AG04450 (cell line): ENCODE measurements at regions of chr2 and their contacts with region 1.

Region 1: DNA sequence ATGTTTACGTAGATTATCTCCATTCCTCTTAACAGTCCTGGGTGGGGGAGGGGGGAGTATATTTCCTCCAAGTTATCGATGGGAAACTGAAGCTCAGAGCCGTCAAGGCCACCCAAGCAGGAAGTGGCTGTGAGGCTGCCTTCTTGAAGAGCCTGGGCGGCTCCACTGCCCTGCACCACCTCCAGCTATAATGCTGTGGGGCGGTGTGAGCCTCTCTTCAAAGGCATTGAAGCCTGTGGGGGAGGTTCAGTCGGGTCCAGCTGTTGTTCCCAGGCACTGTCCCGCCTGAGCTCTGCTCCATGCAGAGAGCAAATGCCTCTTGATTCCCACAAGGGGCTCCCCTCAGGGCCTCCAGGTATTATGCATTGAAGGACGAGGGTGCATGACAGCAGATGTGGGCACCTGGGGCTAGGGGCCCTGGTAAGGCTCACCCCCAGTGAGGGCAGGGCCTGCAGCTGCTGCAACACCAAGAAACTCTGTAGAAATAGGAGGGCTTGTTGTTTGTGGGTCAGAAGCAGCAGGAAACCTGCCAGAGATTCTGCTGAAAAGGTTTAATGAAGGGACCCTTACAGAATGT is 29.5 kb upstream of the LAPTM4A start:
- DNase-seq: no peak
- H3K4me3 ChIP-seq: no peak overlapping the region
- H3K27ac ChIP-seq: no peak overlapping the region
- H3K27me3 ChIP-seq: peaks cover 2% of the 10 kb centered on the region
- CTCF ChIP-seq: no peak

Region 2: DNA sequence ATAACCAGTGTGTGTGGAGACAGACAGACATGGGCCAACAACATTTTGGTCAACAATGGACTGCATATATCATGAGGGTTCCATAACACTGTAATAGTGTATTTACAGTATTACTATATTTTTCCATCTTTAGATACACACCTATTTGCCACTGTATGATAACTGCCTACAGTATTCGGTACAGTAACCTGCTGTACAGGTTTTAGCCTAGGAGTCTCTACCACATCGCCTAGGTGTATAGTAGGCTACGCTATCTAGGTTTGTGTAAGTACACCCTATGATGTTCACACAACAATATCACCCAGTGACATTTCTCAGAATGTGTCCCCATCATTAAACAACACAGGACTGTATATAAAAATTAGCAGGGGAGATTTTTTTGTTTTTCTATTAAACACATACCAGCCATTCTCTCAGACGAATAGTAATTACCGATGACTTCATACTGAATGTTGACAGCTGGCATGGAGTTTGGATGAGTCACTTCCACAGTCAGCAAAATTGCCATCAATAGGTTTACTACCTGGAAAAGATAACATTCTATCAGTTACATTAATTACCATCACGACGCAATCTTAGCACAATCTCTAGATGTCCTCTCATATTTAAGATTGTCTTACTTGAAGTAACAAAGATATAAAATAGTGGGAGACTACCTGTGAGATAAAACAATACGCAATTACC is 40.3 kb before region 1 on chr2:
- CTCF ChIA-PET with region 1: no interaction called
- POLR2A ChIA-PET with region 1: interaction called, 10 read pairs
- DNase-seq: no peak
- H3K4me3 ChIP-seq: no peak overlapping the region
- H3K27ac ChIP-seq: no peak overlapping the region
- H3K27me3 ChIP-seq: no peaks in the 10 kb centered on the region
- CTCF ChIP-seq: no peak